Heart right ventricle (tissue), 16 donors: ENCODE measurements at regions of chr19 and their contacts with region 1.

Region 1: DNA sequence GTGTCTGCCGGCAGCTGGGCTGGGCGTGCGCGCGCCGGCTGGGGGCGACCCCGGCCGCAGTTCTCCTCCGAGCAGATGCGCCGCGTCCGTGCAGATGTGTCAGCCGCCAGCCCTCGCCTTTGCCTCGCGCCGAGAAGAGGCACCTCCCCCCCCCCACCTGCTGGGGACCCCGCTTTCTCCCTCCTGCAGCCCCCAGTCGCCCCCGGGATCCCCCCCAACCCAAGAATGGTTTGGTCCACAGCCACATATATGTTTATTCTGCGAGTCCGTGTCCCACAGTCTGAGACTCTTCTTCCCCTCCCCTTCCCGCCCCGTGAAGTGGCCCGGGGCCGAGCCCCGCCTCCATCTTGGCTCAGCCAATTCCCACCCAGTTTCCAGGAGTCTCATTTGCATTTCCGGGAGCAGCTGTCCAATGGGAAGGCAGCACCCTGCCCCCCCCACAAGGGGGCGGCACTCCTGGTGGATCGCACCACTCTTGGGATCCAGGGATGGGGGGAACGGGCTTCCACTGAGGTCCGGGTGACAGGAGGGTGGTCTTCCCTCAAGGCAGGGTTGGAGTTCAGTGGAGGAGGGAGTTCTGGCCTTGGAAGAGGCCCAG is 8.6 kb downstream of the ISOC2 start:
- DNase-seq: peak; percentile 71 to 80
- ATAC-seq: peak; percentile 60 to 88 (median 78)
- H3K4me3 ChIP-seq: no peak overlapping the region
- H3K27ac ChIP-seq: no peak overlapping the region
- H3K4me1 ChIP-seq: peaks cover 4 to 14% (median 11%) of the 10 kb centered on the region in 9 donors
- H3K27me3 ChIP-seq: peaks cover 17 to 37% (median 30%) of the 10 kb centered on the region in 7 donors
- CTCF ChIP-seq: peak in 4 of 9 donors; percentile 17 to 34 (median 22)

Region 2: DNA sequence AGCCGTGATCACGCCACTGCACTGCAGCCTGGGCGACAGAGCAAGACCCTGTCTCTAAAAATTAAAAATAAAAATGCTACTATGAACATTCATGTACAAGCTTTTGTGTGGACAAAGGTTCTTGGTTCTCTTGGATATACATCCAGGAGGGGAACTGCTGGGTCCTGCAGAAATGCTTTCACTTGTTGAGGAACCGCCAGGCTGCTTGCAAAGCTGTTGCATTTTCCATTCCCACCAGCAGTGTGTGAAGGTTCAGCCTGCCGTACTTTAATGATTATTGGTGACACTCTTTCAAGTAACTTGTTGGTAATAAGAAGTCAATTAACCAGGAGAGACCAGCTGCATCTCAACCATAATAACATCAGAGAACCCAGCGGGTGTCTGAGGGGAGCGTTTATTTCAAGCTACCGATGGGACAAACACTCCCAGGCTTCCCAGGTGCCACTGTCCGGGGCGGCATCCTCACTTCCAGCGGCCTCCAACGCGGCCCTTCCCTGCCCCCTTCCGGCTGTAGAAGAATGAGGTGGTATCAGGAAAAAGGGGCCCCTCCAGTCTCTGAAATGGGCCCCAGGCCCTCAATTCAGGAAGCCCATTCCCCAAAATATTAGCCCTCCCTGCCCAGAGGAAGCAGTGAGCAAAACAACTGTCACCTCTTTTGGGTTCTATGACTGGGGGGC is 320.3 kb before region 1 on chr19:
- intact Hi-C with region 1: loop called in 1 of 10 experiments (anchors 10 kb)
- DNase-seq: no peak
- ATAC-seq: no peak
- H3K4me3 ChIP-seq: no peak overlapping the region
- H3K27ac ChIP-seq: no peak overlapping the region
- H3K4me1 ChIP-seq: no peaks in the 10 kb centered on the region
- H3K27me3 ChIP-seq: peaks cover 0 to 28% (median 12%) of the 10 kb centered on the region in 7 donors
- CTCF ChIP-seq: peak in 6 of 9 donors; percentile 6 to 45 (median 20)

Region 3: DNA sequence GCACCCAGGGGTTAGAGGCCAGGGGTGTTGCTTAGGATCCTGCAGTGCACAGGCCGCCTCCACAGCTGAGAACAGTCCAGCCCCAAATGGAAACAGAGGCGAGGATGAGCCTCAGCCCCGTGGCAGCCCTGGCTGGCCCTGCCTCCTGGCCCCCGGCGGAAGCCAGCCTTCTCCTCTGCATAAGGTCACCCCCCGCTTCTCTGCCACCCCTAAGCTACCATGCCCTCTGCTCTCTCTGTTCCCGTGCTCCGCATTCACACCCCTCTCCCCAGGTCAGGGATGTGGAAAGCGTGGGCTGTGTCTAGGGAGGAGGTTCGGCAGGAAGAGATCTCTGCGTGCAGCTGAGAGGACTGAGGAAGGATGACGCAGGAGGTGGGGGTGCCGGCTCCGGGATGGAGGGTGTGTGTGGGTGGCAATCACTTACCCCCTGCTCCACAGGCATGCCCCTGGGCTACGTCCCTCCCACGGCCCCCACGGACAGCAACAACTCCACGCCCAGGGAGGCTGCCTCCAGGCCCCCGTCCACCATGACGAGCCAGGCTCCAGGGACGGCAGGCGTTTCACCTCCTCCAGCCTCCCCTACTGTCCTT is 41.4 kb after region 1 on chr19:
- intact Hi-C with region 1: no loop called
- DNase-seq: peak; percentile 68 to 76
- ATAC-seq: peak; percentile 71 to 92 (median 88)
- H3K4me3 ChIP-seq: peak overlapping the region; percentile 2 to 59 (median 50)
- H3K27ac ChIP-seq: peak overlapping the region; percentile 80 to 97 (median 89)
- H3K4me1 ChIP-seq: peaks cover 6 to 39% (median 14%) of the 10 kb centered on the region in 9 donors
- H3K27me3 ChIP-seq: peaks cover 0 to 25% (median 2%) of the 10 kb centered on the region in 7 donors
- CTCF ChIP-seq: no peak

Region 4: DNA sequence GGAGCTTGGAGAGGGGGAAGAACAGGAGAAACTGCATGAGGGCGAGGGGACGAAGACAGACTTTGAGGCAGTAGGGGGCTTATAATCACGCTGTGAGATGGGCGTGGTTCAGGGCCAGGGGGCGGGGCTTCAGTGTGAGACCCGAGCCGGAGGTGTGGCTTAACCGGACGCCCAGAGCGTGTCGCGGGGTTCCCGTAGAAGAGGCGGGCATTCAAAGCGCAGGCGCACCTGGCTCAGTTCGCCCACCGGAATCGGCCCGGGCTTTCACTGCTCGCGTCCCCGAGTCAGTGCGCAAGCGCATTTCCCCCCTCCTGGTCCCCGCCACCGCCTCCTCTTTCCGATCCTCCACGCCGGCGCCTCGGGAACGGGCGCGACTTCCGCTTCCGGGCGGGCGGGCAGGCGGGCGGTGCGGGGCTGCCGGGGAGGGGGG is 152.4 kb after region 1 on chr19:
- intact Hi-C with region 1: no loop called
- DNase-seq: peak; percentile 98
- ATAC-seq: peak; percentile 86 to 93 (median 89)
- H3K4me3 ChIP-seq: peak overlapping the region; percentile 51 to 85 (median 77)
- H3K27ac ChIP-seq: peak overlapping the region; percentile 84 to 98 (median 96)
- H3K4me1 ChIP-seq: peaks cover 4 to 49% (median 30%) of the 10 kb centered on the region in 9 donors
- H3K27me3 ChIP-seq: no peaks in the 10 kb centered on the region
- CTCF ChIP-seq: no peak